WTC11 (cell line): ENCODE measurements at regions of chr16 and their contacts with region 1.

Region 1: DNA sequence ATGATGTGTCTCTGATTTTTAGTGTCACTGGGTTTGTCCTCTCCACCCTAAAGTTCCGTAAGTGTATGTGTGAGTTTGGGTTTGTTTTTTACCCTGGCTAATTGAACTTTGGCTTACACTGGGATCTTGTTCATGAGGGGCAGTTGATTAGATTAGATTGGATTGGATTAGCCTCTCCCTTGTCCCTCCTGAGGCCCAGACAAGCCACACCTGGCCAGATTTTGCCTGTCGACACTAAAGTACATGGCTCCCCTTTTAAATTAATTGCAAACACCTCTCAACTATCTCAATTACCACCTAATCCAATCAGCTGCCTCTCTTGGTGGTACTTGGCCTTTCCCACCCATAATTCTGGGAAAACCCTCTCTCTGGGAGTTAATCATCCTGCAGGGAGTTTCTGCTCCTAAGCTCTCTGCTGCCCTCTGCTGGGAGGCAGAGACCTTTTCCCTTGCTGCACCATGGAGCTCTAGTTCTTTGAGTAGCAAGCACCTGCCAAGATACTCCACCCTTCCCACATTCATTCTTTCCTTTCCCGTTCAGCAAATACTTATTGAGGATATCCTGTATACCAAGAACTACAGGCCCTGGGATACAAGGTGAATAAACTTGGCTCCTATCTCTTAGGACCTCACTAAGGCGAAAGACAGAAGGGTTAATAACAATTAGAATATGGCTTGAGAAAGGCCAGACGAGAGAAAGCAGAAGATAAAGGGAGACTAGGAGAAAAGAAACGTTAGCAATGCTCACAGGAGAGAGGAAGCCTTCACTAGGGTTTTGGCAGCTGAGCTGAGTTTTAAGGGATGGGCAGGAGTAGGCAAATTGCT is 60.0 kb upstream of the MPHOSPH6 start:
- DNase-seq: peak; percentile 86
- ATAC-seq: peak; percentile 94
- H3K4me3 Mint-ChIP-seq: no peak overlapping the region
- H3K27ac Mint-ChIP-seq: no peak overlapping the region
- H3K4me1 Mint-ChIP-seq: peaks cover 8% of the 10 kb centered on the region; the same call in 1 of the 2 replicates
- H3K27me3 Mint-ChIP-seq: no peaks in the 10 kb centered on the region
- CTCF ChIP-seq: peak; percentile 86

Region 2: DNA sequence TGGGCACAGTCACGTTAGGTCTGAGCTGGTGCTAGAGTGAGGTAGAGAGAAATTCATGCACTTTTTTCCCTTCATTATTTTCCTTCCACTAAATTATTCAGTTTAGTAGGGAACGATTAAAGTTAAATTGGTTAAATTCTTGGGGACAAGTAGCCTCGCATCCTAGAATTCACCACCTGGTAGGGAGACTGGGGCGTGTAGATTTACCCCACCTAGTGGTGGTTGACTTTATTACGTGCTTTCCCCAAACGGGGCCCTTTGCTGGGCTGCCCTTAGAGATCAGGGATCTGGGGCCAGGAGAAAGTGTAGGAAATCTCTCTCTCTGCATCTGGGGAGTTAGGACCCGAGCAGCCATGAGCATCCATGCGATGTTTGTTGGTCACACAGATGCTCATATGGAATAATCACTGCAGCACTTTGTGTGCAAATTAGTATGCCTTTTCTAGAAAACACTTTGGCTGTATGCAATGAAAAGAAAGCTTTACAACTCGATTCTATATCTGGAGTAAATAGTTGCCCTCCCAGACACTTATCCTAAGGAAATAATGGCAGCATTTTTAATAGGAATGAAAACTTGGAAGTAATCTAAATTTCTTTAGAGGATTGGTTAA is 343.9 kb before region 1 on chr16:
- CTCF ChIA-PET with region 1: interaction called, 16 read pairs
- POLR2A ChIA-PET with region 1: no interaction called
- DNase-seq: peak; percentile 60
- ATAC-seq: peak; percentile 86
- H3K4me3 Mint-ChIP-seq: no peak overlapping the region
- H3K27ac Mint-ChIP-seq: no peak overlapping the region
- H3K4me1 Mint-ChIP-seq: no peaks in the 10 kb centered on the region
- H3K27me3 Mint-ChIP-seq: no peaks in the 10 kb centered on the region
- CTCF ChIP-seq: peak; percentile 70

Region 3: DNA sequence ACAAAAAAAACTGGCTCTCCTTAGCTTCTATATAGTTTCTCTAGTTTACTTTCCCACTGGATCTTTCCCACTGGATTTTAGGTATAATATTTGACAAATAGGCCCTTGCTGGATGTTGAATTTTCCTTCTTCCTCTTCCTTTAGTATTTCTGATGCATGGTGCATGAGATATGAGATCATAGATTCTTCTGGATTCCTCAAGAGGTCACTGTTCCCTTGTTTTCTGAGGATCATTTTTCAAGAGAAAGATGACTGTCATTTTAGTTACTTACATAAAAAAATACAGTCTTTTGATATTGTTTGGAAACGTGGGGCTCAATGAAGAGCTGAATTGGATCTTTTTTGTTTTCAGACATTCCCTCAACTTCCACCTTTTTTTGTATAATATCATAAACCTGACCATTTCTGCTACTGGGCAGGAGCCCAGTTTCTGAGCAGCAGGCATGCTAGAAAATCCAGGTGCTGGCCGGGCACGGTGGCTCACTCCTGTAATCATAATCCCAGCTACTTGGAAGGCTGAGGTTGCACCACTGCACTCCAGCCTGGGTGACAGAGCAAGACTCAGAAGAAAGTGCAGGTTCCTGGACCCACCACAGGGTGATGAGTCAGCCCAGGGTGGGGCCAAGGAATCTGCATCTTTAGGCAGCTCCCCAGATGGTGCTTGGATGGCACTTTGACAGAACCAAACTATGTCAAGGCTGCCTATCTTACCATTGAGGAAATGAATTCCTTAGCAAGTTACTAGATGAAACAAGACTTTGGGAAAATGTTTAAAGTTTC is 289.0 kb before region 1 on chr16:
- CTCF ChIA-PET with region 1: interaction called, 54 read pairs
- POLR2A ChIA-PET with region 1: interaction called, 3 read pairs
- DNase-seq: no peak
- ATAC-seq: peak; percentile 9; the same call in 1 of the 2 replicates
- H3K4me3 Mint-ChIP-seq: no peak overlapping the region
- H3K27ac Mint-ChIP-seq: no peak overlapping the region
- H3K4me1 Mint-ChIP-seq: peaks cover 79% of the 10 kb centered on the region
- H3K27me3 Mint-ChIP-seq: peaks cover 20% of the 10 kb centered on the region
- CTCF ChIP-seq: peak; percentile 10; the same call in 1 of the 2 replicates

Region 4: DNA sequence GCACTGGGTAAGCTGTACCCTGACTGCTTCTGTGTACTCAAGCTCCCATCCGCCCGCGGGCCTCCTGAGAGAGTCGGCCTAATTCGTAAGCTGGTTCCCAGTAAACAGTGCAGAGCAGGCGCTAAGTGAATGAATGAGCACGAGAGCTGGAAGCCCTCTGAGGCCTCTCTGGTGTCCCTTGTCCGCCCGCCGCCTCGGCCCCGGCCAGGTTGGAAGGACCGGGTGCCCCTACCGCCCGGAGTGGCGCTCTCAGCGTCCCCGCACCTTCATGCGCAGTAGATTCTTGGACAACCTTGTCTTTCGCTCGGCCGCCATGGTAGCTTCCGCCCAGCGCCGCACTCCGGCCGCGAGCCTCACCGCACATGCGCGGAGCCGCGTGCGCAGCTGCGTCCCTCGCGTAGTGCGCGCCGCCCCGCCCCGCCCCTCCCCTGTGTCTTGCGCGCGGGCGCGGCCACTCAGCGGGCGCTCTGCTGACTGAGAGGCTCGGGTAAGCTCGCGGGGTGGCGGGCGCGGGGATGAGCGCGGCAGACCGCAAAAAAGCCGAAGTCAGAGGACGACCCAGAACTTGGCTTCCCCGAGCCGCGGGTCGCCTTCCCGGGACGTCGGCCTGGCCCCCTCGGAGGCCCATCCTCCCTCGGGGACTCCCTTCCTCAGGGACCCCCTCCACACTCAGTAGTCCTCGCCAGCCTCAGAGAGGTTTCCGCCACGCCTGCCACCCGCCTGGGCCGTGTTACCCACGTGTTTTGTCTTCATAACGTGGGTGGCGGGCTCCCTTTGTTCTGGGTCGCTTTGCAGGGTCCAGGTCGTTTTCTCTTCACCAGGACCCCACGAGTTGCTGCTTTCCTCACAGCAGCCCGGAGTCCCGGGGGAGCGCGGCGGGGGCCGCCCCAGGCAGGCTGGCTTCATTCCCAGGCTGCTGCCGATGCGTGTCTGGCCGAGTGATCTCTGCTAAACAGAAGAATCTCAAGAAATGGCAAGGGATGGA is 59.9 kb before region 1 on chr16 and contains the start of gene MPHOSPH6:
- CTCF ChIA-PET with region 1: interaction called, 17 read pairs
- POLR2A ChIA-PET with region 1: no interaction called
- DNase-seq: peak; percentile 85
- ATAC-seq: peak; percentile 93
- H3K4me3 Mint-ChIP-seq: peak within 1 kb of the TSS; percentile 86
- H3K27ac Mint-ChIP-seq: peak within 1 kb of the TSS; percentile 89
- H3K4me1 Mint-ChIP-seq: peaks cover 10% of the 10 kb centered on the region
- H3K27me3 Mint-ChIP-seq: peaks cover 25% of the 10 kb centered on the region
- CTCF ChIP-seq: no peak
- total RNA-seq, gene MPHOSPH6: 29.2 to 31.3 TPM (median 30.8 TPM) in 3 replicates

Region 5: GRCh38 chr16:82240111-82240510 is 10.1 kb after region 1 on chr16:
- CTCF ChIA-PET with region 1: interaction called, 23 read pairs
- POLR2A ChIA-PET with region 1: no interaction called
- DNase-seq: no peak
- ATAC-seq: no peak
- H3K4me3 Mint-ChIP-seq: no peak overlapping the region
- H3K27ac Mint-ChIP-seq: no peak overlapping the region
- H3K4me1 Mint-ChIP-seq: peaks cover 8% of the 10 kb centered on the region
- H3K27me3 Mint-ChIP-seq: 0 out of 2 replicates have a peak, but pooled peaks cover 2% of the 10 kb centered on the region
- CTCF ChIP-seq: no peak

Region 6: GRCh38 chr16:82248677-82249076 is 18.7 kb after region 1 on chr16:
- CTCF ChIA-PET with region 1: interaction called, 10 read pairs
- POLR2A ChIA-PET with region 1: no interaction called
- DNase-seq: no peak
- ATAC-seq: no peak
- H3K4me3 Mint-ChIP-seq: no peak overlapping the region
- H3K27ac Mint-ChIP-seq: no peak overlapping the region
- H3K4me1 Mint-ChIP-seq: no peaks in the 10 kb centered on the region
- H3K27me3 Mint-ChIP-seq: 0 out of 2 replicates have a peak, but pooled peaks cover 2% of the 10 kb centered on the region
- CTCF ChIP-seq: no peak

Region 7: GRCh38 chr16:82287937-82288336 is 57.9 kb after region 1 on chr16:
- CTCF ChIA-PET with region 1: no interaction called
- POLR2A ChIA-PET with region 1: no interaction called
- DNase-seq: no peak
- ATAC-seq: no peak
- H3K4me3 Mint-ChIP-seq: no peak overlapping the region
- H3K27ac Mint-ChIP-seq: no peak overlapping the region
- H3K4me1 Mint-ChIP-seq: no peaks in the 10 kb centered on the region
- H3K27me3 Mint-ChIP-seq: no peaks in the 10 kb centered on the region
- CTCF ChIP-seq: no peak